Left ventricle myocardium superior (tissue), 1 donor: ENCODE measurements at regions of chr12 and their contacts with region 1.

Region 1: GRCh38 chr12:110513842-110514241 is 11.7 kb downstream of the RAD9B start:
- DNase-seq: no peak
- ATAC-seq: no peak

Region 2: DNA sequence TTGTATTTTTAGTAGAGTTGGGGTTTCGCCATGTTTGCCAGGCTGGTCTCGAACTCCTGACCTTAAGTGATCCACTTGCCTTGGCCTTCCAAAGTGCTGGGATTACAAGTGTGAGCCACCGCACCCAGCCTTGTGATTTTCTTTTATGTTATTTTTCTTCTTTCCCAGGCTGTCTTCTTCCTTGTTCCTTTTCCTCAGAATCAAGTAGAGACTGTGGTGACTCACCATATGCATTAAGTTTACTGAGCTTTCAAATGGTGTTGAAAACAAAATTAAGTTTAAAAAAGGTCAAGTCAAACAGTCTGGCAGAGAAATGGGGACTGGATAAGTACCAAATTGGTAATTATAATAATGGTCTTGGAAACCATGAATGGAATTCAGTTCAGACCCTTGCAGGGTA is 69.4 kb before region 1 on chr12:
- intact Hi-C with region 1: no loop called
- DNase-seq: no peak
- ATAC-seq: no peak

Region 3: GRCh38 chr12:110583137-110584059 is 69.6 kb after region 1 on chr12 and contains the start of gene PPTC7:
- intact Hi-C with region 1: no loop called
- DNase-seq: peak; percentile 98
- ATAC-seq: peak; percentile 90
- total RNA-seq, gene PPTC7: 124 TPM

Region 4: GRCh38 chr12:110600254-110600653 is 86.4 kb after region 1 on chr12:
- intact Hi-C with region 1: loop called (anchors 5 kb)
- DNase-seq: no peak
- ATAC-seq: peak; percentile 55

Region 5: DNA sequence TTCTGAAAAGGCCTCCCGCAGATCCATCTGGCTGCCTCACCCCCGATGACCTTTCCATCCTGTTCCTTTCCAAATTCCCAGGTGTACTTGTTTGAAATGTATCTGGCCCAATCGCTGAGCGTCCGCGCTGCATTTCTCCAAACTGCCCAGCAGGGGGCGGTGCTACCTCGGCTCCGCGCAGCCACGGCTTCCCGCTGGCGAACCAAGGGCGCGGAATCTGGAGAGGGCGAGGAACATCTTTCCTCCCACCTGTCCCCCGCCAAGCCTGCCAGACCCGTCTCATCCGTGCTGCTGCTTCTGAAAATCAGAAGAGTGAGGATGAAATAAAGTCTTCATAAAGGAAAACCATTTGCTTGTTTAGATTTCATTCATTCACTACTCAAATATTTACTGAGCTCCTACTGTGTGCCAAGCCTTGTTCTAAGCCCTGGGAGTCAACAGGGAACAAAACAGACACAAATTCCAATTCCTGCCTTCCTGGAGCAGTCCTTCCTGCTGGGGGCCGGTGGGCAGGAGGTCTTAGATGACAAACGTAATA is 423.3 kb after region 1 on chr12:
- intact Hi-C with region 1: no loop called
- DNase-seq: peak; percentile 74
- ATAC-seq: peak; percentile 51